BJ (cell line): ENCODE measurements at regions of chr1 and their contacts with region 1.

Region 1: DNA sequence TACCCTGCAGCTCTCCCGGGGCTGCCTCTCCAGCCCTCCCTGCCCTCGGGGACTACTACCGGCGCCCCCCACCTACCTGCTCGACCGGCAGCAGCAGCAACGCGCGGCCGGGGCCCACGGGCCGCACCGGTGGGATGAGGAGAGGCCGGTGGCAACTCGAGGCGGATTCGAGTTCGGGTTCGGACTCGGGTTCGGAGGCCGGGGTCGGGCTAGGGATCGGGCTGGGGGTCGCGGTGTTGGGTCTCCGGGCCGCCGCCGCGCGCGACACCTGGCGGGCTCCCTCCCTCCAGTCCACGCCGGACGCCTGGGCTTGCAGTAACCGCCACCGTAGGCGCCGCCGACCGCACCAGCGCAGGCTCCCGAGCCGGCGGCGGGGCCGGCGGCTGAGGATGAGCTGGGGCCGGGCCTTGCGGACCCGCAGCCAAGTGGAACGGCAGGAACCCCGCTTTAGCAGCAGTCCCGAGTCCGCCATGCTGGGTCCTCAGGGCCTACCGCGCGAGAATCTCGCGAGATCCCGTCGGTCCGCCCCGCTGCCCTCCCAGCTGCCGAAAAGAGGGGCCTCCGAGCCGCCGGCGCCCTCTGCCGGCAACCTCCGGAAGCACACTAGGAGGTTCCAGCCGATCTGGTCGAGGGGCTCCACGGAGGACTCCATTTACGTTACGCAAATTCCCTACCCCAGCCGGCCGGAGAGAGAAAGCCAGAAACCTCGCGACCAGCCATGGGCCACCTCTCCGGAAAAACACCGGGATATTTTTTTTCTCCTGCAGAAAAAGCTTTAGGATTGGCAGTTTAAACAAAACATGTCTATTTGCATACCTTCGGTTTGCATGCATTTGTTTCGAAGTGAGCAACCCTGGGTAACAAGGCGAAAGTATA is at the start of gene NOL9:
- DNase-seq: peak; percentile 50
- H3K4me3 ChIP-seq: peak within 1 kb of the TSS; percentile 81
- H3K27me3 ChIP-seq: no peaks in the 10 kb centered on the region
- CTCF ChIP-seq: peak; percentile 98
- polyA plus RNA-seq, gene NOL9: 9.5 and 15.1 TPM in 2 replicates

Region 2: DNA sequence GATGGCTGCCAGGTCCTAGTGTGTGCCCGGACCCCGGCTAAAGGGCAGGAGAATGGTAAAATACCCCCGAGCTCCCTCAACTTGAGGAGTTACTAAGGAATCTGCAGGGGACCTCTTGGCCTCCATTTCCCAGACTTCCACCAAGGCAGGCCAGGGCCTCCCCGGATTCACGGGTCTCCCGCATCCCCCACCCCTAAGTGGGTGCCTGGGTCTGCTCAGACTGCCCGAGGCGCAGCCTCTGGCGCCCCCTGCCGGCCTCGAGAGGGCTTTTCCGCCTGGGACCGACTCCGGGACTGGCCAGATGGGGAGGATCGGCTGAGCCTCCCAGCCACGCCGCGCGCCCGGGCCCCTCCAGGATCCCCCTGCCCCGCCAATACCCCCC is 64.5 kb before region 1 on chr1:
- CTCF ChIA-PET with region 1: interaction called, 15 read pairs
- POLR2A ChIA-PET with region 1: no interaction called
- DNase-seq: no peak
- H3K4me3 ChIP-seq: peak overlapping the region; percentile 58
- H3K27me3 ChIP-seq: no peaks in the 10 kb centered on the region
- CTCF ChIP-seq: peak; percentile 97

Region 3: DNA sequence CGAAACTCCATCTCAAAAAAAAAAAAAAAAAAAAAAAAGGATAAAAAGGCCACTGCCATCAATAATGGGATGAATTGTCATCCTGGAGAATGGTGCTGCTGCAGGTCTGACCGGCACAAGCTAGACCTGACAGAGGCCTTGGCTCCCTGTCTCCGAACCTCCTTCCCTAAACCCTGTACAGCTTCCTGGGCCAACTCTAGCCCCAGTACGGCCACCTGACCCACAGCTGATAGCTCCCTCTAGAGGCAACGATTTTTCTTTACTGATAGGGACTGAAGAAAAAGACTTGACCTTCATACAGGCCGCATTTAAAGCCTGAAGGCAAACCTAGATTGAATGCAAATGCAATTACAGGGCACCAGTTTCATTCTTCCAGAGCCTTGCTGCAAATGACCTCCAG is 30.7 kb before region 1 on chr1:
- CTCF ChIA-PET with region 1: interaction called, 11 read pairs
- POLR2A ChIA-PET with region 1: no interaction called
- DNase-seq: no peak
- H3K4me3 ChIP-seq: no peak overlapping the region
- H3K27me3 ChIP-seq: no peaks in the 10 kb centered on the region
- CTCF ChIP-seq: peak; percentile 67

Region 4: DNA sequence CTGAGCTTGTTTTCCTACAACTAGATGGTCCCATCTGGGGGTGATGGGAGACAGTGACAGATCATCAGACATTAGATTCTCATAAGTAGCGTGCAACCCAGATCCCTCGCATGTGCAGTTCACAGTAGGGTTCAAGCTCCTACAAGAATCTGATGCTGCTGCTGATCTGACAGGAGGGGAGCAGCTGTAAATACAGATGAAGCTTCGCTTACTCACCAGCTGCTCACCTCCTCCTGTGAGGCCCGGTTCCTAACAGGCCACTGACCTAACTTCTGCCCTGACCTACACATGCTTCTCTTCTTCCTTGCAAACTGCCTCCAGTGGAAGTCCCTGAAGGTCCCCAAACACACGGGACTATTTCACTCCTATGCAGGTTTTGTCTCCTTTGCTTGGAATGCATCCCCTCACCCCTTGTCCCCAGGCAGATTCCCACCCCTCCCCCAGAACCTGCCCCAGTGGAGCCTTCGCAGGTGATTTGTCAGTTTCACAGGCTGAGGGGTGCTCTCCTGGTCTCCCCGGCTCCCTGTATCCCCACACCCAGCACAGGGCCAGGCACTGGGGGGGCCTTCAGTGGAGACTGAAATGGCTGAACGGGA is 19.9 kb after region 1 on chr1:
- CTCF ChIA-PET with region 1: interaction called, 12 read pairs
- POLR2A ChIA-PET with region 1: no interaction called
- DNase-seq: no peak
- H3K4me3 ChIP-seq: no peak overlapping the region
- H3K27me3 ChIP-seq: peaks cover 4% of the 10 kb centered on the region
- CTCF ChIP-seq: no peak

Region 5: DNA sequence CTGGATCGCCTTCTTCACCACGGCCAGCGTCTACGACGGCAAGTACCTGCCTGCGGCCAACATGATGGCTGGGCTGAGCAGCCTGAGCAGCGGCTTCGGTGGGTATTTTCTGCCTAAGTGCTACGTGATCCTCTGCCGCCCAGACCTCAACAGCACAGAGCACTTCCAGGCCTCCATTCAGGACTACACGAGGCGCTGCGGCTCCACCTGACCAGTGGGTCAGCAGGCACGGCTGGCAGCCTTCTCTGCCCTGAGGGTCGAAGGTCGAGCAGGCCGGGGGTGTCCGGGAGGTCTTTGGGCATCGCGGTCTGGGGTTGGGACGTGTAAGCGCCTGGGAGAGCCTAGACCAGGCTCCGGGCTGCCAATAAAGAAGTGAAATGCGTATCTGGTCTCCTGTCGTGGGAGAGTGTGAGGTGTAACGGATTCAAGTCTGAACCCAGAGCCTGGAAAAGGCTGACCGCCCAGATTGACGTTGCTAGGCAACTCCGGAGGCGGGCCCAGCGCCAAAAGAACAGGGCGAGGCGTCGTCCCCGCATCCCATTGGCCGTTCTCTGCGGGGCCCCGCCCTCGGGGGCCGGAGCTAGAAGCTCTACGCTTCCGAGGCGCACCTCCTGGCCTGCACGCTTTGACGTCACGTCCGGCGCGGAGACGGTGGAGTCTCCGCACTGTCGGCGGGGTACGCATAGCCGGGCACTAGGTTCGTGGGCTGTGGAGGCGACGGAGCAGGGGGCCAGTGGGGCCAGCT is 25.3 kb after region 1 on chr1 and contains the start of gene ZBTB48:
- CTCF ChIA-PET with region 1: interaction called, 12 read pairs
- POLR2A ChIA-PET with region 1: no interaction called
- DNase-seq: peak; percentile 76
- H3K4me3 ChIP-seq: peak within 1 kb of the TSS; percentile 97
- H3K27me3 ChIP-seq: no peaks in the 10 kb centered on the region
- CTCF ChIP-seq: no peak
- polyA plus RNA-seq, gene ZBTB48: 7.8 and 14.0 TPM in 2 replicates

Region 6: DNA sequence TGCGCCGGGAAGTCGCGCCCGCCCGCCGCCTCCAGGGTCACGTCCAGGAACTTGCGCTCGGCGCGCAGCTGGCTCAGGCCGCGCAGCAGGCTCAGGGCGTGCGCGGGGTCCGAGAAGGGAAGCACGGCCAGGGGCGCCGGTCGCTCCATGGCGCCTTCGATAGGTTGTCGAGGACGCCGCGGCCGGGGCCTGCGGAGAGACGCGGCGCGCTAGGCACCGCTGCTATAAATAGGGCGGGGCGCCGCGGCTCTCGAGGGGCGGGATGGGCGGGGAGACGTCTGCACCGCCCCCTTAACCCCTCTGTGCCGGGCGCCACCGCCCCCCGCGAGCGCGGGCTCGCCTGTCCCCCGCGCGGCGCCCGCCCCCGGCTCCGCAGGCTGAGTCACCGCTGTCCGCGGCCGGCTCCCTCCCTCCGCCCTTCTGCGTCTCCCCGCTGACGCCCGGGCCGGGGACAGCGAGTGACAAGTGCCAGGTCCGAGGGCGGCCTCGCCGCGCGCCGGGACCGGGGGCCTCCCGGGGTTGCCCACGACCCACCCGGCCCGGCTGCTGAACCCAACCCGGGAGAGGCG is 48.5 kb after region 1 on chr1 and contains the start of gene KLHL21:
- CTCF ChIA-PET with region 1: interaction called, 29 read pairs
- POLR2A ChIA-PET with region 1: no interaction called
- DNase-seq: peak; percentile 35
- H3K4me3 ChIP-seq: peak within 1 kb of the TSS; percentile 97
- H3K27me3 ChIP-seq: no peaks in the 10 kb centered on the region
- CTCF ChIP-seq: no peak
- polyA plus RNA-seq, gene KLHL21: 8.5 and 19.2 TPM in 2 replicates

Region 7: DNA sequence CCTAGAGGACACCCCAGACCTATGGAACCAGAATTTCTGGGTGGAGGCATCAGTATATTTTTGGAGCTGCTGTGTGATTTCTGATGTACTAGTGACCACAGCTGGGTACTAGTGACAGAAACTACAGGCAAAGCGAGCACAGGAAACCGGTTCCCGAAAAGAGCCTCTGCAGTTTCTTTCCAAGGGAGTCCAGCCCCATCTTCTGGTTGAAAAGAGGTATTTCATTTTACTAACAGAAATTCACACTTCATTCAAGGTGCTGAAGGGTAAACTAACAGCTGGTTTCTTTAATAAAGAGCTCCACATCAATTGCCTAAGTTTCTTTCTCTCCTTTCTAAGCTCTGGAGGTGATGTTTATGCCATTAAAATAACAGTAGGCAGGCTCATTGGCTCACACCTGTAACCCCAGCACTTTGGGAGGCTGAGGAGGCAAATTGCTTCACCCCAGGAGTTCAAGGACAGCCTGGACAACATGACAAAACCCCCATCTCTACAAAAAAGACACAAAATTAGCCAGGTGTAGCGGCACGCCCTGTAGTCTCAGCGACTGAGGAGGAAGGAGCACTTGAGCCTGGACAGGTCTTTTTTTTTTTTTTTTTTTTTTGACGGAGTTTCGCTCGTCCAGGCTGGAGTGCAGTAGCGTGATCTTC is 92.4 kb after region 1 on chr1:
- CTCF ChIA-PET with region 1: interaction called, 30 read pairs
- POLR2A ChIA-PET with region 1: no interaction called
- DNase-seq: no peak
- H3K4me3 ChIP-seq: no peak overlapping the region
- H3K27me3 ChIP-seq: no peaks in the 10 kb centered on the region
- CTCF ChIP-seq: peak; percentile 61